ENCODE measurements at regions of chr11 and their contacts with region 1.

Region 1: DNA sequence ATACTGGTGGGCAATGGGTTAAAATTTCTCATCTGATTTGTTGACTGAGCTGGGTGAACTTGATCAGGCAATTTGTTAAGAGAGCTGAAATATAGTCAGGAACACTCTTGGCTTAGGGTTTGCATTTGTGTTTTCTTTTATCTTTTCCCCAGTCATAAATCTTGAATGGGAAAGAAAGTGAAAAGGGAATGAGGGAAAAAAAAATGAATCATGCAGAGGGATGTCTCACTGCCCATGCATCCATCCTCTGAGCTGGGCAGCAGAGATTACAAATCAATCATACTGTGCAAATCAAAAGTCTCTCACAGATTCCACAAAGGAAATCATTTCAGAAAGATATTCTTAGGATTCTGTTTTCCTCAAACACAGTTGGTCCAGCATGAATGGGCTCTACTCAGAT is 174.2 kb upstream of the MPPED2 start:
- DNase-seq: no peak
- H3K4me3 ChIP-seq: no peak overlapping the region
- H3K27ac ChIP-seq: no peak overlapping the region
- H3K4me1 ChIP-seq: no peaks in the 10 kb centered on the region
- H3K27me3 ChIP-seq: no peaks in the 10 kb centered on the region
- CTCF ChIP-seq: no peak

Region 2: DNA sequence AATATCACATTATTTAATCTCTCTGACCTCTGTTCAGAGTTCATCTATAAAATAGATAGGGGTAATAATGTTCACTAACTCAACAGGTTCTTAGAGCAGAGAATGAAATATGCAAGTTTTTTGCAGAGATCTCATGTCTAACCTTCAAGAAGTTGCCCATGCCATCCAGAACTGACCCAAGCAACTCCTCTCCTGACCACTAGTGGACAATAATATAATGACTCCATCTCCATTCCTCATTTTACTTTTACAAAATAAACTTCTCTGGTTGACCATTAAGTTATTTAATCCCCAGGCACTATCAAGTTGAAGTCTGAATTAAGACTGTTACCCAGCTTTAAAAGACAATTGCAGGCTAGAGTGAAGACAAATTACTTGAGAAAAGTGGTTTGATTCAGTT is 1126.1 kb before region 1 on chr11:
- intact Hi-C with region 1: loop called (anchors 10 kb)
- DNase-seq: no peak
- H3K4me3 ChIP-seq: no peak overlapping the region
- H3K27ac ChIP-seq: no peak overlapping the region
- H3K4me1 ChIP-seq: no peaks in the 10 kb centered on the region
- H3K27me3 ChIP-seq: no peaks in the 10 kb centered on the region
- CTCF ChIP-seq: no peak

Region 3: DNA sequence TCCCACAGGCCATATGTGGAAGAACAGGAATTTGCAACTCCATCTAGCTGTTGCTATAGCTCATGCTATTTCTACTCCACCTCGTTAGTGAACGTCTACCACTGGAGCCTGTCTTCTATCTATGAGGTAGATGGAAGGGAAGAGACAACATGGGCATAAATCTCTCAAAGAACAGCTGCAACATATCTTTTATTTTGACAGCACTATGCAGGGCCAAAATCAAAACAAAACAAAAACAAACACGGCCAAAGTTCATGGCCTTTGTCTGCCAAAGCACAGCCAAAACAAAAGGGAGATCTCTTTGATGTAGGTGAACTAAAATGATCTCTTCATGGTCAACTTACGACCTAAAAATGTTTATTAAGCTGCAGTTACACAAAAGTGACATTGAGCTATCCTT is 41.0 kb after region 1 on chr11:
- intact Hi-C with region 1: no loop called
- DNase-seq: no peak
- H3K4me3 ChIP-seq: no peak overlapping the region
- H3K27ac ChIP-seq: no peak overlapping the region
- H3K4me1 ChIP-seq: no peaks in the 10 kb centered on the region
- H3K27me3 ChIP-seq: no peaks in the 10 kb centered on the region
- CTCF ChIP-seq: no peak